ENCODE measurements at regions of chr2 and their contacts with region 1.

Region 1: DNA sequence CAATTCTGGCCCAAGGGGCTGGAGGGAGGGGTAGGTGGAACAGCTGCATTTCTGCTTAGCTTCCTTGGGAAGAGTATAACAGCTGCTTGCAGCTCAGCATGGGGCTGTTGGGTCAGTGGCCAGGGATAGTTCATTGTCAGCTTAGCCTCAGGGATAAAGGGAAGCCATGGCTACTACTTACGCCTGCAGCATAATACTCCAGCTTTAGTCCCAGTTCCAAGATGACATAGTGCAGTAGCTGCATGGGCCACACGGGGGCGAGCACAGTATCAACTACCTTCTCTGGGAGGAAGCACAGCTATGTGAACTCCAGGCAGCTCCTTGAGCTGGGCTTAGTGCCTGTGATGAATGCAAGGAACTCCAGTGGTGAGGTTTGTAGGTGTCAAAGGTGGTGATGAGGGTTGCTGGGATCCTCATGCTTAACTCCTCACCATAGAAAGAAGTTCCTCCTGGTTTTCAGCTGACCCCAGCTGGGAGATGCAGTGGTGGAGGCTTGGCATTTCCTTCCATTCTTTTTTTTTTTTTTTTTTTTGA is 35.4 kb upstream of the RHOB start:
- DNase-seq: peak; percentile 82
- CTCF ChIP-seq: peak; percentile 86

Region 2: GRCh38 chr2:20365249-20365817 is 46.1 kb before region 1 on chr2:
- CTCF ChIA-PET with region 1: interaction called, 16 read pairs
- POLR2A ChIA-PET with region 1: no interaction called
- DNase-seq: peak; percentile 72
- CTCF ChIP-seq: no peak

Region 3: GRCh38 chr2:20424300-20425290 is 13.2 kb after region 1 on chr2:
- CTCF ChIA-PET with region 1: interaction called, 162 read pairs
- POLR2A ChIA-PET with region 1: no interaction called
- DNase-seq: peak; percentile 64
- CTCF ChIP-seq: no peak

Region 4: DNA sequence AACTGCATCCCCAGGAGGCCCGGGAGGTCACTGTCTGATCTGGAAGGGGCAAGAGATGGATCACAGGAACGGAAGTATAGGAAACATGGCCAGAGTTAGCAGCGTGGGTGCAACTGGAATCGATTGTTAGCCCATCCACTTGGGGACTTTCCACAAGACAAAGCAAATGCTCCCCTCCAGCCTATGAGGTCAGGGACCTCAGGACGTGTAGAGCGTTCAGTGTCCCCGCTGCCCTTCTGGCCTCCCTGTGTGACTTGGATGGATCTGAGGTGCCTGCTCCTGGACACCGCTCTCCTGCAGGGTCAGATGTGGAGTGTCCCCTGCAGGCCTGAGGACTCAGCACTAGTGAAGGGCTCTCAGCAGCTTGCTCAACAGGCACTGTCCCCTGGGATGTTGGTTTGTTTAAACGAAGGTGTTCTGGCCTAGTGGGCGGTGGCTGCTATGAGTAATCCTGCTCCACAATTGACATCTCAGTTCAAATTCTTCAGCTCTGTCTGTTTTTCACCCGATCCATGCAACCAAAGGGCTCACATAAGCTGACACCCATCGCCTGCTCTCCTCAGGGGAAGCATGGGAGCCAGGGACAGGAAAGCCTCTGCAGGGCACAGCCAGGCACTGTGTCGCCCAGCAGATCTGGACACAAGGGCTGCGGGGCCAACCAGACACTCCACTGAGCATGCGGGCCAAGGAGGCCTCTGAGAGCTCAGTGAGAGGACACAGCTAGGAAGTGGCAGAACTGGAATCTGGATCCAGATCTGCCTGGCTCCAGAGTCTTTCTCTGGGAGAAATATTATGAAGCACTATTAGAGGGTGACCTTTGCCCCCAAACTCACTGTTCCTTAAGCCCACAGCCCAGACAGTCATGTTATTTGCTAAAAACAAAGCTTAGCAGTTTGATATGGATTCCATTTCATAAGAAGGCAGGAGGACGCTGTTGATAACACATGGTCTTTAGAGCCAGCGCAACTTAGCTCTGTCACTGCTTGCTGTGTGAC is 113.9 kb after region 1 on chr2:
- CTCF ChIA-PET with region 1: interaction called, 18 read pairs
- POLR2A ChIA-PET with region 1: no interaction called
- DNase-seq: peak; percentile 81
- CTCF ChIP-seq: peak; percentile 13

Region 5: DNA sequence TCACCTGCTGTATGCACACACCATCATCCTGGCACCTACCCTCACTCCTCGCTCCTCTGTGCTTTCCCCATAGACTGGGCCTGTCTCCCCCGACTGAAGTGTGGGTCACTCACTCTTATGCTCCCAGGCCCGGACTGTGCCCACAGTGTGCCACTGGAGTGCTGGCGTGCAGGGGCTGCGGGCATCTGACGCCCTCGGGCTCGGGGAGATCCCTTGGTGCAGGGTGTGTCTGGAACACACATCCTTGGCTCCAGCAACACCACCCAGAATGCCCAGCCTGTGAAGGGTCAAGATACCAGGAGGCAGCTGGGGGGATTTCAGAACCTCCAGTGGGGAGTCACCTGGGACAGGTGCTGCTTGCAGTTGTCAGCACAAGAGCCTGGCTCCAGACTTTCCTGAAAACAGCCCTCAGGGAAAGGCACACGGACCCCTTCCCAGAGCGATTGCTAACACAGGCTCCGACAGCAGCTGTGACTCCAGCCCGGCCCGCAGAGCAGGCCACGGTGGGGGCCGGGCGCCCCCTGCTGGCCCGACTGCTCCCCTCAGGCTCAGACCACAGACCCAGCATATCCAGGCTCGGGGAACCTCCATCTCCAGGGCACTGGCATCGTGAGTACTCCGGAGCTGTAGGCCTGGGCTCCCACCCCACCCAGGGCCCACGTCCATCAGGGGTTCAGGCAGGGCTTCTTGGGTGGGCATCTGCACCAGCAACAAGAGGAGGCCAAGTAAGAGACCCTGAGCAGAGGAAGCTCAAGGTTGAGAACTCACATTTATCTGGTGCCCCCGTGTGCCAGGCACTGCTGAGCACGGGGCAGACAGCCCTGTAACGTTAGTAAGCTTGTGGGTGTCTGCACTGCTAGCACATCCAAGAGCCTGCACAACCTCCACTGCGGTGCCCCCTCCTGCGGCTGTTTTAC is 230.9 kb after region 1 on chr2:
- CTCF ChIA-PET with region 1: interaction called, 92 read pairs
- POLR2A ChIA-PET with region 1: no interaction called
- DNase-seq: peak; percentile 91
- CTCF ChIP-seq: peak; percentile 84

Region 6: DNA sequence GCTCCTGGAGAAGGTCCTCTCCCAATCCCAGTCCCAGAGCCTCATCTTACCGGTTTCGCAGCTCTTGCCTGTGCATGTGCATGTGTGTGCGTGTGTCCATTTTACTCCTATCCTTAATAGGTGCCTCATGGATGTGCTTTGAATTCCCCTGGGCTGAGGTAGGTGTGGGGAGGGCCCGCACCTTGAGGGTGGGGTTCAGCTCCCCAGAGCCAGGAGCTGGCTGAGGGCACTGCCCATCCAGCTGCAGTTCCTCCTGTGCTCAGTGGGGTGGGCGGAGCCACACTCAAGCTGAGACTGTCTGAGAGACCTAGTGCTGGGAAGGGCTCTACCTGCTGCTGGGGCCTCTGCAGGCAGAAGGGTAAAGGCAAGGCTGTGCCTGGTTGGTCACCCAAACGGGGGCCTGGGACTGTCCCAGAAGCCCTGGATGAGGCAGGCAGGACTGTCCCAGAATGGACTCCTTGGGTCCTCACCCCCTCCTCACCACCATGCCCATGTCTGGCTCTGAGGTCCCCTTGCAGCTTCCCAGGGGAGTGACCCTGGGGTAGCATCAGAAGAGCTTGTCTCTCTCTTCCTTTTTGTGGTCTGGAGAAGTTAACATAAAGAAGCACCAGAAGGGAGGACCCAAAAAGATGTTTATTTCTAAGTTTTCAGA is 264.4 kb after region 1 on chr2:
- CTCF ChIA-PET with region 1: interaction called, 11 read pairs
- POLR2A ChIA-PET with region 1: no interaction called
- DNase-seq: no peak
- CTCF ChIP-seq: no peak

Measured in GM10248 (cell line).